ENCODE measurements at regions of chr12 and their contacts with region 1.

Region 1: DNA sequence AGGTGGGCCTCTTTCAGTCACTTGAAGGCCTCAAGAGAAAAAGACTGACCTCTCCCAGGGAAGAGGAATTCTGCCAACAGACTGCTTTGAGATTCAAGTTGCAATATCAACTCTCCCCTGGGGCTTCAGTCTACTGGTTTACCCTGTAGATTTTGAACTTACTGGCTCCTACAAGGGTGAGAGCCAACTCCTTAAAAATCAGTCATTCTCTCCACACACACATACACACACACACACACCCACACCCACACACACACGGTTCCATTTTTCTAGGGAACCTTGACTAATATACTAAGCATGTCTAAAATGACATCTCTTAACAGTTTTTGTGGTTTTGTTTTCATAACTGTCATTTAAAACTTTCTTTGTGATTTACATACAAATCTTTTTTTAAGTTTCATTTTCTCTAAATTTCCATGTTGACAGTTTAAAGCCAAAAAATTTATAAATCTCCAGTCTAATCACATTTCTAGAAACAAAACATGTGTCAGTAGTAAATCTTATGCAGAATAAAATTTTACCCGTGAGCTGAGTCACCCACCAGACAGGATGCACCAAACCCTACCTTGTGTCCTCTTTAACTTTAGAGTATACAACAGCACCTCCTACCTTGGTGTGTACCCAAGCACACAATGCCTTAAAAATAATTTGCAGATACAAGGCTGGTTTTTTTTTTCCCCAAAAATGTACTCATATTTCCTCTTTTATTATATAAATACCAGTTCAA is 394.6 kb downstream of the AEBP2 start:
- DNase-seq: peak; percentile 61
- H3K4me3 Mint-ChIP-seq: no peak overlapping the region
- H3K27ac Mint-ChIP-seq: peak overlapping the region; percentile 73
- H3K4me1 Mint-ChIP-seq: peaks cover 27% of the 10 kb centered on the region
- H3K27me3 Mint-ChIP-seq: no peaks in the 10 kb centered on the region

Region 2: DNA sequence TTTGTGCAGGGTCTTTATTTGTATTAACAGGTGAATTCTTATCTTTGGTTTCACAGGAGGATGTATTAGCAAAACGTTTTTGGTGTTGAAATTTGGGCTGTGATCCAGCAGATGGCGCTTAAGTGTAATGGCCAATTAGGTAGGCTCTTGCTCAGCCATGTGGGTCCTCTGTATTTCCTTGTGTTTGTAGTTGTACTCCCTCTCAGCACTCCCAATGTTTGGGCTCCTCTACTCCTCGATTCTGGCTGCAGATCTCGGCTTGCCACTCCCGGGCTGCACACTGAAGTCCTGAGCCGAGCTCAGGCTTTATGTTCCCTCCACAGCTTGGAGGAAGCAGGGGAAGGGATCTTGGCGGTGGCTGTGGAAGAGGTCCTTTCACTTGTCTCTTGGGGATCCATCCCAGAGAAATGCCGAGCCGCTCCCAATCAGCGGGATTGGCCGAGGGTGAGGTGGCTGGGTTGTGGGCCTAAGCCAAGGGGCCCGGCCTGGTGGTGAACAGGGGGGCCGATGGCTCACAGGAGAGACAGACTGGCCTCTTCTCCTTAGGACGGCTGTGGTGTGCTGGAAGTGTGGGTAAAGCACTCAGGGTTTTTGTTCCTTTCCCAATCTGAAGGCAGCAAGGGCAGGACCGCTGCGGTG is 260.9 kb before region 1 on chr12:
- CTCF ChIA-PET with region 1: no interaction called
- POLR2A ChIA-PET with region 1: no interaction called
- intact Hi-C with region 1: loop called (anchors 10 kb)
- DNase-seq: peak; percentile 45
- H3K4me3 Mint-ChIP-seq: no peak overlapping the region
- H3K27ac Mint-ChIP-seq: no peak overlapping the region
- H3K4me1 Mint-ChIP-seq: no peaks in the 10 kb centered on the region
- H3K27me3 Mint-ChIP-seq: no peaks in the 10 kb centered on the region

Region 3: DNA sequence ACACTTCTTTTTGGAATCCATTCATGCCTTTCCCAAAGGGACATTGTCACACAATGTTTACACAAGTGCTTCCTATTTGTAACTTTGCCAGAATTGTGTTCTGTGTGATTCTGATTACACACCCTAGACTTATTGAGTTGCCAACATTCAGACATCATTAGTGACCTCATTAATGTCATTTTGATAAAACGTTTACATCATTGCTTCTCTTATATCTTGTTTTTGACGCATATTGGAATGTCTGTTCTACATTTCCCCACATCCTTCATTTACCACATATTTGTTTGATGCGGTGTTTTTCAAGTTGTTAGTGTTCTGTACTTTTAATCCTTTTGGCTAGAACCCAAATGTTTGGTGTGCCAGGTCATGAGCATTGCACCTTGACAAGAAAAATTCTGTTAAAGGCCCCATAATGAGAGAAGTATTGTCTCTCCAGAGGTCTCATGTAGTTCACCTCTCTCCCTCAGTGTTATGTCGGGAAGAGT is 89.2 kb before region 1 on chr12:
- CTCF ChIA-PET with region 1: interaction called, 7 read pairs
- POLR2A ChIA-PET with region 1: no interaction called
- intact Hi-C with region 1: loop called (anchors 5 kb)
- DNase-seq: no peak
- H3K4me3 Mint-ChIP-seq: no peak overlapping the region
- H3K27ac Mint-ChIP-seq: no peak overlapping the region
- H3K4me1 Mint-ChIP-seq: no peaks in the 10 kb centered on the region
- H3K27me3 Mint-ChIP-seq: peaks cover 1% of the 10 kb centered on the region

Region 4: DNA sequence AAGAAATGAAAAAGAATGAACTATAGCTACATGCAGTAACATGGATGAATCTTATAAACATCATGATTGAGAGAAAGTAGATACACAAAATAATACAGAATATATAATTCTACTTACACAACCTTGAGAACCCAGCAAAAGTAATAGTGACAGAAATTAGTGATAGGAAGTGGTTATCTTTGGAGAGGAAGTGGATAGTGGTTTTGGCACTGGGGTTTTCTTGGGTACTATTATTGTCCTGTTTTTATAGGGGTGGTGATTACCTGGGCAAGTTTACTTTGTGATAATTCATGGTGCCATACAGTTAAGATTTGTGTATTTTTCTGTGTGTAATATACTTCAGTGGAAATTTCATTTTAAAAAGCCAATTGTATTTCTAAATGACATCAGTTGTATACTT is 41.9 kb before region 1 on chr12:
- CTCF ChIA-PET with region 1: interaction called, 4 read pairs
- POLR2A ChIA-PET with region 1: no interaction called
- intact Hi-C with region 1: loop called (anchors 5 kb)
- DNase-seq: no peak
- H3K4me3 Mint-ChIP-seq: no peak overlapping the region
- H3K27ac Mint-ChIP-seq: no peak overlapping the region
- H3K4me1 Mint-ChIP-seq: peaks cover 23% of the 10 kb centered on the region
- H3K27me3 Mint-ChIP-seq: no peaks in the 10 kb centered on the region

Region 5: GRCh38 chr12:19819231-19819630 is 14.7 kb before region 1 on chr12:
- CTCF ChIA-PET with region 1: no interaction called
- POLR2A ChIA-PET with region 1: no interaction called
- intact Hi-C with region 1: no loop called
- DNase-seq: no peak
- H3K4me3 Mint-ChIP-seq: no peak overlapping the region
- H3K27ac Mint-ChIP-seq: no peak overlapping the region
- H3K4me1 Mint-ChIP-seq: no peaks in the 10 kb centered on the region
- H3K27me3 Mint-ChIP-seq: no peaks in the 10 kb centered on the region

Region 6: DNA sequence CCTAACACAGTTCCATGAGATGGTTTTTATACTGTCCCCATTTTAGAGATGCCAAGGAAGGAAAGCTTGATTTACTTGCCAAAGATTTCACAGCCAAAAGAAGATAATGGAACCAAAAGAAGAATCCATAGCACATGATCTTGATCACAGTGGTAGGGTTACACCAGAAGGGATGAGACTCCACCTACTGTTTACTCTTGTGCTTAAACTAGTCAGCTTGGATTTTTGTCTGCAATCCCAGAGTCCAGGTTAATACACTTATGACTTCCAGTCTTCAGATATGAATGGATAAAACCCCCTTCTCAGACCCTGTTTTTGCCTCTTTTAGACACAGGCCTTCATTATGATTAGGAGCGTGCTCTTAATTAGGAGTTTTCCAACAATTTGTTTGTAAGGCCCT is 59.6 kb after region 1 on chr12:
- CTCF ChIA-PET with region 1: interaction called, 11 read pairs
- POLR2A ChIA-PET with region 1: interaction called, 5 read pairs
- intact Hi-C with region 1: loop called (anchors 1 kb)
- DNase-seq: no peak
- H3K4me3 Mint-ChIP-seq: no peak overlapping the region
- H3K27ac Mint-ChIP-seq: no peak overlapping the region
- H3K4me1 Mint-ChIP-seq: peaks cover 20% of the 10 kb centered on the region
- H3K27me3 Mint-ChIP-seq: no peaks in the 10 kb centered on the region

Measured in activated CD4-positive, alpha-beta memory T cell treated with anti-CD3 and anti-CD28 coated beads for 36 hours (primary cell).